Caco-2 (cell line): ENCODE measurements at regions of chr18 and their contacts with region 1.

Region 1: GRCh38 chr18:49491857-49492693 is 5.0 kb upstream of the C18orf32 start:
- DNase-seq: peak; percentile 86 to 90
- H3K4me3 ChIP-seq: peak within 1 kb of the TSS; percentile 75
- H3K4me3 Mint-ChIP-seq: peak within 1 kb of the TSS; percentile 87
- H3K27ac Mint-ChIP-seq: peak within 1 kb of the TSS; percentile 92
- H3K4me1 ChIP-seq: peaks cover 7% of the 10 kb centered on the region
- H3K4me1 Mint-ChIP-seq: no peaks in the 10 kb centered on the region
- H3K27me3 ChIP-seq: no peaks in the 10 kb centered on the region
- H3K27me3 Mint-ChIP-seq: no peaks in the 10 kb centered on the region
- CTCF ChIP-seq: no peak

Region 2: GRCh38 chr18:49335677-49336076 is 156.4 kb before region 1 on chr18:
- CTCF ChIA-PET with region 1: no interaction called
- POLR2A ChIA-PET with region 1: no interaction called
- intact Hi-C with region 1: no loop called
- DNase-seq: peak in 1 of 2 experiments; percentile 16
- H3K4me3 ChIP-seq: no peak overlapping the region
- H3K4me3 Mint-ChIP-seq: no peak overlapping the region
- H3K27ac Mint-ChIP-seq: no peak overlapping the region
- H3K4me1 ChIP-seq: no peaks in the 10 kb centered on the region
- H3K4me1 Mint-ChIP-seq: no peaks in the 10 kb centered on the region
- H3K27me3 ChIP-seq: no peaks in the 10 kb centered on the region
- H3K27me3 Mint-ChIP-seq: no peaks in the 10 kb centered on the region
- CTCF ChIP-seq: no peak

Region 3: GRCh38 chr18:49459404-49460171 is 32.5 kb before region 1 on chr18:
- CTCF ChIA-PET with region 1: no interaction called
- POLR2A ChIA-PET with region 1: no interaction called
- intact Hi-C with region 1: loop called (anchors 2 kb)
- DNase-seq: no peak
- H3K4me3 ChIP-seq: peak overlapping the region; percentile 47
- H3K4me3 Mint-ChIP-seq: peak overlapping the region; percentile 76
- H3K27ac Mint-ChIP-seq: peak overlapping the region; percentile 20
- H3K4me1 ChIP-seq: no peaks in the 10 kb centered on the region
- H3K4me1 Mint-ChIP-seq: peaks cover 8% of the 10 kb centered on the region
- H3K27me3 ChIP-seq: no peaks in the 10 kb centered on the region
- H3K27me3 Mint-ChIP-seq: no peaks in the 10 kb centered on the region
- CTCF ChIP-seq: no peak

Region 4: DNA sequence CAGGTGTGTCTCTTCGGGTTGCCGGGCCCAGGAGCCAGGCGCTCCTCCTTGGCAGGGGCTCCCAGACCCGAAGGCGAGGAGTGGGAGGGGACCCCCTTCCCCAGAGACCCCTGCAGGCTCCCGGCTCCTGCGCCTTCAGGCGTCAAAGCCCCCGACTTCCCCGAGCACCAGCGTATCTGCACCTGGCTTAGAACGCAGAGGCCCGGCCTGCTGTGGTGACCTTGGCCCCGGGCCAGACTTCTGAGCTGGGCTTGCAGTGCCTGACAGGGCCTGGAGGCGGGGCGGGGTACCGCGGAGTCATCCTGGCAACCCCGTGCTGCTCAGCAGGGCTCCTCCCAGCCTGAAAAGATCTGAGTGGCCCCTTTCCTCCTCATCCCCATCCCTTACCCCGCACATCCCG is 909.8 kb after region 1 on chr18:
- CTCF ChIA-PET with region 1: no interaction called
- POLR2A ChIA-PET with region 1: no interaction called
- intact Hi-C with region 1: no loop called
- DNase-seq: no peak
- H3K4me3 ChIP-seq: no peak overlapping the region; the same call in 1 of the 2 replicates
- H3K4me3 Mint-ChIP-seq: no peak overlapping the region
- H3K27ac Mint-ChIP-seq: no peak overlapping the region
- H3K4me1 ChIP-seq: peaks cover 28% of the 10 kb centered on the region
- H3K4me1 Mint-ChIP-seq: peaks cover 36% of the 10 kb centered on the region
- H3K27me3 ChIP-seq: no peaks in the 10 kb centered on the region
- H3K27me3 Mint-ChIP-seq: no peaks in the 10 kb centered on the region
- CTCF ChIP-seq: no peak

Region 5: GRCh38 chr18:50726960-50727589 is 1235.0 kb after region 1 on chr18:
- CTCF ChIA-PET with region 1: no interaction called
- POLR2A ChIA-PET with region 1: interaction called, 10 read pairs
- intact Hi-C with region 1: no loop called
- DNase-seq: no peak
- H3K4me3 ChIP-seq: no peak overlapping the region
- H3K4me3 Mint-ChIP-seq: no peak overlapping the region
- H3K27ac Mint-ChIP-seq: no peak overlapping the region
- H3K4me1 ChIP-seq: peaks cover 12% of the 10 kb centered on the region; the same call in 1 of the 2 replicates
- H3K4me1 Mint-ChIP-seq: no peaks in the 10 kb centered on the region
- H3K27me3 ChIP-seq: no peaks in the 10 kb centered on the region
- H3K27me3 Mint-ChIP-seq: no peaks in the 10 kb centered on the region
- CTCF ChIP-seq: no peak